Panc1 (cell line): ENCODE measurements at regions of chr15 and their contacts with region 1.

Region 1: GRCh38 chr15:28219116-28219515 is 102.9 kb downstream of the HERC2 start:
- DNase-seq: no peak
- ATAC-seq: no peak
- H3K4me3 ChIP-seq: no peak overlapping the region
- H3K27ac ChIP-seq: no peak overlapping the region
- H3K4me1 ChIP-seq: no peaks in the 10 kb centered on the region
- H3K27me3 ChIP-seq: no peaks in the 10 kb centered on the region
- CTCF ChIP-seq: no peak

Region 2: DNA sequence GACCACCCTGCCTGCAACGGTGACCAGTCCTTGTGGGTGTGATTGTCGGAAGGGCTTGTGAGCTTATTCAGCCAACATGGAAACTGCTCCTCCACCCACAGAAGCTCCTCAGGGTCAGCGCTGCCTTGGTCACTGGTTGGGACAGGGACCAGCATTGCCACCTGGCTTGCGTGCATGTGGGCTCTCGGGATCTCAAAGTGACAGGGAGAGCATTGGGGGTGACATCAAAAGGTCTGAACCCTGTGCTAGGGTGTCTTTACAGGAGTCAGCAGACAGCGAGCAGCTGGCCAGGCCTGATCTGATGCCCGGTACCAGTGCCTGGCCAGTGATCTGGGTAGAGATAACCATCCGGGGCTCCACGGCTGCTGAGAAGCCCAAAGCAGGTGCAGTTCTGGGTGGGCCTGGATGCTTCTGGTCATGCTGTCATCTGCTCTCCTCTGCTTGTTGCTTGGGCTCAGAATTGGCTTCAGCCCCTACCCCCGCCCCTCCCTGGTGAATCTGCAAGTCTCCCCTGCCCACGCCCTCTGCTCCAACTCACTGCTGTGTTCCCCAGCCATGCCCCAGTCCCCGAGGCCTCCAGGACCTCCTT is 915.6 kb after region 1 on chr15:
- CTCF ChIA-PET with region 1: interaction called, 11 read pairs
- POLR2A ChIA-PET with region 1: no interaction called
- in situ Hi-C with region 1: no loop called
- intact Hi-C with region 1: no loop called
- DNase-seq: no peak
- ATAC-seq: no peak
- H3K4me3 ChIP-seq: no peak overlapping the region
- H3K27ac ChIP-seq: no peak overlapping the region
- H3K4me1 ChIP-seq: peaks cover 4% of the 10 kb centered on the region; the same call in 1 of the 2 replicates
- H3K27me3 ChIP-seq: no peaks in the 10 kb centered on the region; the same call in 1 of the 2 replicates
- CTCF ChIP-seq: no peak